Prostate gland (tissue), 2 donors: ENCODE measurements at regions of chr11 and their contacts with region 1.

Region 1: GRCh38 chr11:45209891-45210699 is 63.7 kb downstream of the PRDM11 start:
- DNase-seq: peak; percentile 78
- H3K4me3 ChIP-seq: no peak overlapping the region
- H3K27ac ChIP-seq: peak overlapping the region; percentile 76 to 82
- H3K4me1 ChIP-seq: peaks cover 9% of the 10 kb centered on the region
- H3K27me3 ChIP-seq: no peaks in the 10 kb centered on the region
- CTCF ChIP-seq: no peak
- POLR2A ChIP-seq: no peak

Region 2: GRCh38 chr11:45147017-45147728 is 62.9 kb before region 1 on chr11:
- intact Hi-C with region 1: loop called (anchors 2 kb)
- DNase-seq: peak; percentile 95
- H3K4me3 ChIP-seq: peak overlapping the region; percentile 61 to 70
- H3K27ac ChIP-seq: peak overlapping the region; percentile 94 to 97
- H3K4me1 ChIP-seq: no peaks in the 10 kb centered on the region
- H3K27me3 ChIP-seq: no peaks in the 10 kb centered on the region
- CTCF ChIP-seq: peak in 2 of 4 experiments; percentile 39 to 41
- POLR2A ChIP-seq: peak; percentile 94

Region 3: GRCh38 chr11:45163956-45164575 is 46.0 kb before region 1 on chr11:
- intact Hi-C with region 1: loop called (anchors 5 kb)
- DNase-seq: no peak
- H3K4me3 ChIP-seq: no peak overlapping the region
- H3K27ac ChIP-seq: no peak overlapping the region
- H3K4me1 ChIP-seq: no peaks in the 10 kb centered on the region
- H3K27me3 ChIP-seq: no peaks in the 10 kb centered on the region
- CTCF ChIP-seq: no peak
- POLR2A ChIP-seq: no peak

Region 4: GRCh38 chr11:45180179-45180842 is 29.8 kb before region 1 on chr11:
- intact Hi-C with region 1: loop called (anchors 2 kb)
- DNase-seq: peak; percentile 58
- H3K4me3 ChIP-seq: peak overlapping the region; percentile 55 to 59
- H3K27ac ChIP-seq: peak overlapping the region; percentile 78 to 79
- H3K4me1 ChIP-seq: no peaks in the 10 kb centered on the region
- H3K27me3 ChIP-seq: no peaks in the 10 kb centered on the region
- CTCF ChIP-seq: peak in 3 of 4 experiments; percentile 40 to 76 (median 72)
- POLR2A ChIP-seq: peak; percentile 29

Region 5: DNA sequence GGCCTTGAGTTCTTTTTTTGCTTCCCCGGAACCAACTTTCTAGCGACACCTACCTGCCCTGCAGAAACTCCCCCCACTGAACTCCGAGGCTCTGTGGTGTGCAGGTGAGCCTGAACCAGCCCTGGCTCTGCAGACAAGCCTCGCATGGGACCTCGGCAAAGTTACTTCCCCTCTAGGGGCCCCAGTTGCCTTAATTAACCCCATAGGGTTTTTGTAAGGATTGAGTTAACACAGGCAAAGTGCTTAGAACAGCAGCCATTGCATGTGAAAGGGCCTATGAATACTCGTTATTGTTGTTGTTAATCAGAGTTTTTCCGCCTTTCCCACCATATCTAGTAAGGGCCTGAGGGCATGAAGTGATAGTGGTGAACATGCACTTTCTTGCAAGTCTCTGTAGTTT is 88.6 kb after region 1 on chr11:
- intact Hi-C with region 1: loop called (anchors 10 kb)
- DNase-seq: no peak
- H3K4me3 ChIP-seq: no peak overlapping the region
- H3K27ac ChIP-seq: no peak overlapping the region
- H3K4me1 ChIP-seq: no peaks in the 10 kb centered on the region
- H3K27me3 ChIP-seq: no peaks in the 10 kb centered on the region
- CTCF ChIP-seq: no peak
- POLR2A ChIP-seq: no peak

Region 6: DNA sequence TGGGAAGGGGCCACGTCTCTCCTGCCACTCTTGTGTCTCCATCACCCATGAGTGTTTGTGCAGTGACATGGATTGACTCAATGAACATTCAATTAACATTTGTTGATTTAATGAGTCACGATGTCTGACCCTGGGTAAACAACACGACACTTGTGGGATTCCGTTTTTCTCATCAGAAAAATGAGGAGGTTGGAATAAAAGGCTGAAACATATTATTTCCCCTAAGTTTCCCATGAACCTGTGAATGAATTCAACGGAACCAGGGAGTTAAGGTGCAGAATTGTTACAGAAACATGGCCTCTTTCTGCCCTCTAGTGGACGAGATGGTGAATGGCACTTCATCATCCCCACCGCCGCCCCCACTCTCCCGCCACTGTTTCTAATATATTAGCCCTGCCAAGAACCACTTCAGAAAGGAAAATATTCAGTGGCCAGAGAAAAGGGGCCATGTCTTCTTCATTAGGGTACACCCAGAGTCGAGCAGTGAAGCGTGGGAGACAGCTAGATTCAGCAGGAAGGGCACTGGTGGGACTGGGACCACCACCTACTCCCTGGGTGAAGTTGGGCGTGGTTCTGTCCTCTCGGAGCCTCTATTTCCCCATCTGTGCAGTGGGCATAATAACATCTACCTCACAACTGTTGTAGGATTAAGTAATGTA is 122.3 kb after region 1 on chr11:
- intact Hi-C with region 1: loop called (anchors 5 kb)
- DNase-seq: no peak
- H3K4me3 ChIP-seq: no peak overlapping the region
- H3K27ac ChIP-seq: no peak overlapping the region
- H3K4me1 ChIP-seq: no peaks in the 10 kb centered on the region
- H3K27me3 ChIP-seq: no peaks in the 10 kb centered on the region
- CTCF ChIP-seq: peak; percentile 47 to 84 (median 65)
- POLR2A ChIP-seq: no peak

Region 7: GRCh38 chr11:45518141-45518832 is 308.2 kb after region 1 on chr11:
- intact Hi-C with region 1: no loop called
- DNase-seq: no peak
- H3K4me3 ChIP-seq: no peak overlapping the region
- H3K27ac ChIP-seq: no peak overlapping the region
- H3K4me1 ChIP-seq: no peaks in the 10 kb centered on the region
- H3K27me3 ChIP-seq: no peaks in the 10 kb centered on the region
- CTCF ChIP-seq: no peak
- POLR2A ChIP-seq: no peak